ENCODE measurements at regions of chr1 and their contacts with region 1.

Region 1: GRCh38 chr1:26126321-26127084 is 14.9 kb downstream of the PDIK1L start:
- DNase-seq: peak in 8 of 9 donors; percentile 33 to 94 (median 90)
- ATAC-seq: peak; percentile 99
- H3K4me3 ChIP-seq: no peak overlapping the region
- H3K4me3 Mint-ChIP-seq: peak overlapping the region; percentile 60 to 91 (median 78)
- H3K27ac ChIP-seq: peak overlapping the region; percentile 61
- H3K27ac Mint-ChIP-seq: peak overlapping the region; percentile 86 to 98 (median 95)
- H3K4me1 ChIP-seq: peaks cover 19 to 24% of the 10 kb centered on the region in 2 donors
- H3K4me1 Mint-ChIP-seq: peaks cover 25 to 55% (median 52%) of the 10 kb centered on the region in 7 donors
- H3K27me3 ChIP-seq: no peaks in the 10 kb centered on the region
- H3K27me3 Mint-ChIP-seq: peaks cover 0 to 13% (median 0%) of the 10 kb centered on the region in 5 donors

Region 2: DNA sequence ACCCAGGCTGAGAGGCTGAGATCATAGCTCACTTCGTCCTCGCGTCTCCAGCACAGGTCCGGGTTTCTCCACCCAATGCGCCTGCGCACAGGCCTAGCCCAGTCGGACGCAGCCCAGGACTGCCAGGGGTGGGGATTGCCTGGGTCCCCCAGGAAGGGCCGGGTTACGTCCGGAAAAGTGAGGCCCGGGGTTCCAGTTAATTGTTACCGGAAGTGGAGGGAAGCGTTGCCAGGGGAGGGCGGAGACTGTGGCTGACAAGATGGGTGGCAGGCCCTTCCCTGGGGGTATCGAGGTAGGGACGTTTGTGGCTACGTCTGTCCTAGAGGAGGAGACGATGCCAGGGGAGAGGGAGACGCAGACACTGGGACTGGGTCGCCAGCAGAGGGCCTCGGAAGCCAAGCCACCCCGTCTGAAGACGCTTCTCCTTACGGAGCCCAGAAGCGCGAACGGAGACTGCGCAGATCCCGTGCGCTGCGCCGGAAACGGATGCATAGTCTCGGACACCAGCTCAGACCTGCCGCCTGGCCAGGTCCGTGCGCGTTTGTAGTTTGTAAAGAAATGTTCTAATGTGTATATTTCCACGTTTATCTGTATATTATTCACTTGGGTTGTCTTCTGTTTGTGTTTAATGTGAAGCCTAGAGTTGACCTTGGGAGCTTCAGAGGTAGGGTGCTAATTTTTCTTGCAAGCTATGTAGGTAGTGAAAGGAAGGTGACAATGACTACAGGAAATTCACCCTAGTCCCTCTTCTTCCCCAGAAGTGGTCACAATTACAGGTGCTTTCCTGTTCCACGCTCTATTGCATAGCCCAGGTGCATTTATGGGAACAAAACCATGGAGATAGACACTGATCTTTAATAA is 886.6 kb before region 1 on chr1:
- CTCF ChIA-PET with region 1: no interaction called
- POLR2A ChIA-PET with region 1: no interaction called
- intact Hi-C with region 1: loop called in 1 of 2 experiments (anchors 10 kb)
- DNase-seq: peak; percentile 72 to 91 (median 79)
- ATAC-seq: peak; percentile 92
- H3K4me3 ChIP-seq: peak overlapping the region; percentile 28
- H3K4me3 Mint-ChIP-seq: peak overlapping the region; percentile 87 to 93 (median 91)
- H3K27ac ChIP-seq: peak overlapping the region; percentile 80
- H3K27ac Mint-ChIP-seq: peak overlapping the region; percentile 89 to 98 (median 97)
- H3K4me1 ChIP-seq: peaks cover 33 to 37% of the 10 kb centered on the region in 2 donors
- H3K4me1 Mint-ChIP-seq: peaks cover 23 to 74% (median 63%) of the 10 kb centered on the region in 7 donors
- H3K27me3 ChIP-seq: no peaks in the 10 kb centered on the region
- H3K27me3 Mint-ChIP-seq: no peaks in the 10 kb centered on the region

Region 3: GRCh38 chr1:26111530-26112406 is 14.7 kb before region 1 on chr1 and contains the start of gene PDIK1L:
- CTCF ChIA-PET with region 1: interaction called, 8 read pairs
- POLR2A ChIA-PET with region 1: interaction called, 93 read pairs
- intact Hi-C with region 1: loop called (anchors 1 kb)
- DNase-seq: peak; percentile 91 to 95 (median 94)
- ATAC-seq: peak; percentile 93
- H3K4me3 ChIP-seq: peak within 1 kb of the TSS; percentile 93
- H3K4me3 Mint-ChIP-seq: peak within 1 kb of the TSS; percentile 86 to 99 (median 93)
- H3K27ac ChIP-seq: peak within 1 kb of the TSS; percentile 84
- H3K27ac Mint-ChIP-seq: peak within 1 kb of the TSS; percentile 84 to 98 (median 92)
- H3K4me1 ChIP-seq: peaks cover 12 to 19% of the 10 kb centered on the region in 2 donors
- H3K4me1 Mint-ChIP-seq: peaks cover 6 to 44% (median 34%) of the 10 kb centered on the region in 7 donors
- H3K27me3 ChIP-seq: no peaks in the 10 kb centered on the region
- H3K27me3 Mint-ChIP-seq: no peaks in the 10 kb centered on the region
- total RNA-seq, gene PDIK1L: 9.1 to 29.6 (median 20.3) TPM

Region 4: GRCh38 chr1:26145041-26145959 is 18.8 kb after region 1 on chr1:
- CTCF ChIA-PET with region 1: interaction called, 59 read pairs
- POLR2A ChIA-PET with region 1: interaction called, 17 read pairs
- intact Hi-C with region 1: loop called (anchors 1 kb)
- DNase-seq: peak; percentile 52 to 77 (median 72)
- ATAC-seq: peak; percentile 99
- H3K4me3 ChIP-seq: no peak overlapping the region
- H3K4me3 Mint-ChIP-seq: peak overlapping the region in 5 of 10 donors; percentile 15 to 66 (median 37)
- H3K27ac ChIP-seq: no peak overlapping the region
- H3K27ac Mint-ChIP-seq: peak overlapping the region in 1 of 9 donors; percentile 19
- H3K4me1 ChIP-seq: no peaks in the 10 kb centered on the region
- H3K4me1 Mint-ChIP-seq: peaks cover 0 to 8% (median 4%) of the 10 kb centered on the region in 7 donors
- H3K27me3 ChIP-seq: no peaks in the 10 kb centered on the region
- H3K27me3 Mint-ChIP-seq: peaks cover 0 to 32% (median 0%) of the 10 kb centered on the region in 5 donors

Region 5: GRCh38 chr1:26306290-26307229 is 180.1 kb after region 1 on chr1 and contains the start of gene UBXN11:
- CTCF ChIA-PET with region 1: no interaction called
- POLR2A ChIA-PET with region 1: no interaction called
- intact Hi-C with region 1: loop called in 1 of 2 experiments (anchors 2 kb)
- DNase-seq: peak; percentile 66 to 95 (median 89)
- ATAC-seq: peak; percentile 99
- H3K4me3 ChIP-seq: peak within 1 kb of the TSS; percentile 87
- H3K4me3 Mint-ChIP-seq: peak within 1 kb of the TSS; percentile 93 to 99 (median 98)
- H3K27ac ChIP-seq: peak within 1 kb of the TSS; percentile 76
- H3K27ac Mint-ChIP-seq: peak within 1 kb of the TSS; percentile 90 to 99 (median 96)
- H3K4me1 ChIP-seq: peaks cover 16 to 31% of the 10 kb centered on the region in 2 donors
- H3K4me1 Mint-ChIP-seq: peaks cover 25 to 58% (median 34%) of the 10 kb centered on the region in 7 donors
- H3K27me3 ChIP-seq: no peaks in the 10 kb centered on the region
- H3K27me3 Mint-ChIP-seq: no peaks in the 10 kb centered on the region
- total RNA-seq, gene UBXN11: 35.7 to 131 (median 124) TPM